ENCODE measurements at regions of chr6 and their contacts with region 1.

Region 1: DNA sequence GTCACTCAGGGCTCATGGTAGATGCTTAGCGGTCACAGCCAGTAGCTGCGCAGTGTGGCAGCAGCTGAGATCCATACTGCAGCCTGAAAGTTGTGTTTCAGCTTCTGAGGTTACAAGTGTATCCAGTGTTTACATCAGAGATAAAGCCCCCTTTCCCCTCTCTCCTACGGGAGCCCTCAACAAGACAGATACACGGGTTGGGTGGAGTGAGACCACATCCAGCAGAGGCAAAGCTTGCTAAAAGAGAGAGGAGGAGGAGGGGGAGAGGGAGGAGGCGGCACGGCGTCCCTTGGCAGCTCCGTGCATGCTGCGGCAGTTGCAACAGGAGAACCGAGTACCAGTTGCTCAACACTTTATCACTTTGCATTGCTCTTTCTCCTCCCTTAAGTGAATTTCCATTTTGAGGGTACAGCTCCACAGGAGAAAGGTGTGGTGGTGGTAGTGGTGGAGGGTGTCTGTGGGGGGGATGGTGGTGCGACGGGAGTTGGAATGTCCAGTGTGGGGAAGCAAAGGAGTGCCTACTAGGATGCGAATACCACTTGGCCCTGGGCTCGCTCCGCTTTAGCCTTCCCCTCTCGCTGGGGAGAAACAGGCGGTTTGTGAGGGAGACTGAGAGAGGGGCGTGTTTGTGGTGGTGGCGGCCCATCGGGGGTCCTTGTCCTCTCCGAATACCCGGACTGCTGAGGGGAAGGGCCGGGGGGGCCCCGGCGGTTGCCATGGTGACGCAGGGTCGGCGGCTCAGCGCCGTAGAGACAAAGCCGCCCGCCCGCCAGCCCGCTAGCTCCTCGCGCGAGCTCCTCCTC is 405 bp upstream of the RNF182 start:
- DNase-seq: no peak
- H3K4me3 Mint-ChIP-seq: peak overlapping the region; percentile 84
- H3K27ac Mint-ChIP-seq: peak overlapping the region; percentile 31
- H3K4me1 Mint-ChIP-seq: peaks cover 13% of the 10 kb centered on the region
- H3K27me3 Mint-ChIP-seq: peaks cover 68% of the 10 kb centered on the region

Region 2: DNA sequence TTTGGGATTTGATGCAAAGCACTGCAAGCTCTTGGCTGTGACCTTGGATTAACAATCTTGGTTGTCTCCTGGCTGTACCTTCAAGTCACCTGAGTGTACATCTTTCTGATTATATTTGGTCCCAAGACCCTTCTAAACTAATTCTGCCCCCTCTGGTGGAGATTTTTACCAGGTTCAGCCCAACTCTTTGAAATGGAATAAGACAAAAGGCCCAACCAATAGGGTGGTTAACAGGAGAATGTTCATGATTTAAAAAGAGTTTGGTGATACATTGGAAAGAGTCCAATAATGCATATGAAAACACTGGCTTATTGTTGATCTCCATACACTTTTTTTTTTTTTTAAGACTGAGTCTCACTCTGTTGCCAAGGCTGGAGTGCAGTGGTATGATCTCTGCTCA is 115.7 kb after region 1 on chr6:
- intact Hi-C with region 1: loop called (anchors 5 kb)
- DNase-seq: no peak
- H3K4me3 Mint-ChIP-seq: no peak overlapping the region
- H3K27ac Mint-ChIP-seq: no peak overlapping the region
- H3K4me1 Mint-ChIP-seq: peaks cover 8% of the 10 kb centered on the region
- H3K27me3 Mint-ChIP-seq: peaks cover 23% of the 10 kb centered on the region

Measured in activated CD4-positive, alpha-beta T cell treated with anti-CD3 and anti-CD28 coated beads, Interleukin-2, amount 10 ng/mL, durations not matched to agents 24 days and 14 days (primary cell).